A673 (cell line): ENCODE measurements at regions of chr6 and their contacts with region 1.

Region 1: DNA sequence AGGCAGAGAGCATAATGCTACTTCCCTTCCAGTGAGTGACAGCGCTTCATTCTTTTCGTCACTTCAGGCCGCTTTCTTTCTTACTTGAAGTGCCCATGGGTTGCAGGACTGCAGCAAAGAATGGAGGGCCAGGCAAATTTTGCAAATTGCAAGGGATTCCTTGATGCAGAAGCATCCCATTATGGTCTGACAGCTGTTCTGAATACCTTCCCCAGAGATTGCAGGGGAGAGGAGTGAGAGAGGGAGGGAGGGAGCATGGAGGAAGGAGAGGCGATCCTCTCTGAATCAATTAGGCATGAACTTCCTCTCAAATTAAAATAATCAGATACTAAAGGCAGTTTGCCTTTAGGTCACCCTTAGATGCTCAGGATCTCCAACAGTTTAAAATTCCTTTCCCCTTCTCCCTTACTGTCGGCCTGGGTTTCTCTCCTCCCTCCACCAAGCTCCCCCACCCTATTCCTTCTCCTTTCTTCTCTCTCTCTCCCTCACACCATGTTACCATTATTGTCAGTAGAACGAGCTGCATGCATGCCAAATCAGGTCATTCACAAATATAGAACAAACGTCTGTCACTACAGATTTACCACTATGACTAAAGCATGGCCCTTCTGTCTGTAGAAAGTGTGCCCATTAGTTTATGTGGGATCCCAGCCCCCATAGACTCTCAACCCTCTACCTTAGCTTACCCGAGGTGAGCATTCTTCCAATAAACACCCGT is 289.2 kb downstream of the CD83 start:
- DNase-seq: peak; percentile 24
- H3K4me3 ChIP-seq: no peak overlapping the region
- H3K27ac ChIP-seq: no peak overlapping the region
- H3K4me1 ChIP-seq: peaks cover 6% of the 10 kb centered on the region
- H3K27me3 ChIP-seq: no peaks in the 10 kb centered on the region
- CTCF ChIP-seq: no peak

Region 2: DNA sequence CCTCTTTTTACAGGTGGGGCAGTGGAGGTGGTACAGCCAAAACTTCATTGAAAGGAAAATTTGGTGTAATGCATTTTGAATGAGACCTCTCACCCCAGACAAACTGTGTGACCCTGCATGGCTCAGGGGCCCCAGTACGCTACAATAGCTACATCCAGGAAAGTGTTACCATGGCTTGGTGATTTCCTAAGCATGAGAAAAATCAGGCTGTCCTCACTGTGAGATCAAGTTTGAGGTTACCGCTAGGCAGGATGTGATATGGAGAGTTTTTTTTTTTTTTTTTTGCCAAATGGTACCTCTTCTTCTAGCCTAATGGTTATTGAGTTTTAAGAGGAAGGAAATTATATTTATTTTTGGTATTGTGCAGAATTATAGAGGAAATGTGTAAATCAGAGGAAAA is 16.1 kb after region 1 on chr6:
- CTCF ChIA-PET with region 1: no interaction called
- POLR2A ChIA-PET with region 1: interaction called, 10 read pairs
- intact Hi-C with region 1: no loop called
- DNase-seq: no peak
- H3K4me3 ChIP-seq: no peak overlapping the region
- H3K27ac ChIP-seq: no peak overlapping the region
- H3K4me1 ChIP-seq: no peaks in the 10 kb centered on the region
- H3K27me3 ChIP-seq: no peaks in the 10 kb centered on the region
- CTCF ChIP-seq: no peak

Region 3: DNA sequence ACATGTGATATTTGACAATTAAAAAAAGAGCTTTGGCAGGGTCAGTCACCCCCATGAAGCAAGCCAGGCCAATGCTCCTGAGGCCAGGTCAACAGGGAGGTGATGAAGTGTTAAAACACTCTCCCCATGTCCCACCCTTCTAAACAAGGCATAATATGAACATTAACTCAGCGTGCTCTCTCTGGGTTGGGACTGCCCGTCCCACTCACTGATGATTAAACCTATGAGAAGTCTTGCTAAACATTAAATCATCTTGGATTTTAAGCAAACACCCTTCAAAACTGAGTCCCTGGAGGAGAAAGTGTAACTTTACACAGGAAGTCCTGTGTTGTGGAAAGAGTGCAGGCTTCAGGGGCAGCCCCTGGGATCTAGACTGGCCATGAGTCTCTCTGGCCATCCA is 269.3 kb after region 1 on chr6:
- CTCF ChIA-PET with region 1: no interaction called
- POLR2A ChIA-PET with region 1: no interaction called
- intact Hi-C with region 1: no loop called
- DNase-seq: no peak
- H3K4me3 ChIP-seq: no peak overlapping the region
- H3K27ac ChIP-seq: no peak overlapping the region
- H3K4me1 ChIP-seq: peaks cover 15% of the 10 kb centered on the region
- H3K27me3 ChIP-seq: no peaks in the 10 kb centered on the region
- CTCF ChIP-seq: no peak

Region 4: GRCh38 chr6:14841901-14842421 is 435.2 kb after region 1 on chr6:
- CTCF ChIA-PET with region 1: no interaction called
- POLR2A ChIA-PET with region 1: no interaction called
- intact Hi-C with region 1: no loop called
- DNase-seq: no peak
- H3K4me3 ChIP-seq: no peak overlapping the region
- H3K27ac ChIP-seq: no peak overlapping the region
- H3K4me1 ChIP-seq: peaks cover 6% of the 10 kb centered on the region
- H3K27me3 ChIP-seq: no peaks in the 10 kb centered on the region
- CTCF ChIP-seq: no peak